GM10248 (cell line): ENCODE measurements at regions of chr7 and their contacts with region 1.

Region 1: GRCh38 chr7:128883622-128884501 is 21.2 kb downstream of the ATP6V1F start:
- DNase-seq: peak; percentile 93
- CTCF ChIP-seq: peak; percentile 98

Region 2: GRCh38 chr7:128425850-128426249 is 458.0 kb before region 1 on chr7:
- CTCF ChIA-PET with region 1: interaction called, 46 read pairs
- POLR2A ChIA-PET with region 1: no interaction called
- DNase-seq: peak; percentile 77
- CTCF ChIP-seq: peak; percentile 91

Region 3: DNA sequence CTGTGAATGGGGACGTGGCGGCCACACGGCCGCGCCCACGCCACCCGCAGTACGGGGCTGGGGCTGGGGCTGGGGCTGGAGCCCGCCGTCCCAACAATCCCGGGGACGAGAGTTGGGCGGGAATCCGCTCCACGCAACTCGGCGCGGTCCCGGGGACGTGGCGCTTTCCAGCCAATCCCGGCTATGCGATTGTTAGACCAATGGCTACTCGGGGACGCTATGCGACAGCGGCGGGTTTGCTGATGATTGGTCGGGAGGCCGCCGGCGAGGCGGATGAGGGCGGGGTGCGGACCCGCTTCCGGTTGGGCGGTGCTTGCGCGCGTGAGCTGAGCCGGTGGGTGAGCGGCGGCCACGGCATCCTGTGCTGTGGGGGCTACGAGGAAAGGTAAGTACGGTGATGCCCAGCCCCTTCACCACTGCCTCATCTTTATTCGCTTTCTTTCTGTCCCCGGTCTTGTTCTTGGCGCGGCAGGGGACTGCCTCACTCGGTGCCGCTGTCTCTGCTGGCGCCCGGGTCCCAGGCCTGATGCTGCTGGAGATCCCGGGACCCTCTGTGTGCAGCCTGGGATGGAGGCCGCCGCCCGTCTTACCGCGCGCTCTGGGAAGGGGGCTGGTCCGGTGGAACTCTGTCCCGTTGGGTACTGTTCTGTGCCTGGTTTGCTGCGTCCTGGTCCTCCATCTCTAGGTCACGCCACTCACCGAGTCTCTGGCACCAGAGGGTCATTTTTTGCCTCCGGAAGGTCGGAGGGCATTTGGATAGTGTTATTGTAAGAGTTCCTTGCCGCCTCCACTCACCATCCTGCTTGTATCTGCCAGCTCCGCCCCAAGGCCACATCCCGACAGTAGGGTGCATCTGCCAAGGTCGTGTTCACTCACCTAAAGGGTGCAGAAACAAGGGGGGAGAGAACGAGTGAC is 144.6 kb before region 1 on chr7 and contains the start of gene CALU:
- CTCF ChIA-PET with region 1: interaction called, 17 read pairs
- POLR2A ChIA-PET with region 1: interaction called, 3 read pairs
- DNase-seq: peak; percentile 100
- CTCF ChIP-seq: no peak

Region 4: DNA sequence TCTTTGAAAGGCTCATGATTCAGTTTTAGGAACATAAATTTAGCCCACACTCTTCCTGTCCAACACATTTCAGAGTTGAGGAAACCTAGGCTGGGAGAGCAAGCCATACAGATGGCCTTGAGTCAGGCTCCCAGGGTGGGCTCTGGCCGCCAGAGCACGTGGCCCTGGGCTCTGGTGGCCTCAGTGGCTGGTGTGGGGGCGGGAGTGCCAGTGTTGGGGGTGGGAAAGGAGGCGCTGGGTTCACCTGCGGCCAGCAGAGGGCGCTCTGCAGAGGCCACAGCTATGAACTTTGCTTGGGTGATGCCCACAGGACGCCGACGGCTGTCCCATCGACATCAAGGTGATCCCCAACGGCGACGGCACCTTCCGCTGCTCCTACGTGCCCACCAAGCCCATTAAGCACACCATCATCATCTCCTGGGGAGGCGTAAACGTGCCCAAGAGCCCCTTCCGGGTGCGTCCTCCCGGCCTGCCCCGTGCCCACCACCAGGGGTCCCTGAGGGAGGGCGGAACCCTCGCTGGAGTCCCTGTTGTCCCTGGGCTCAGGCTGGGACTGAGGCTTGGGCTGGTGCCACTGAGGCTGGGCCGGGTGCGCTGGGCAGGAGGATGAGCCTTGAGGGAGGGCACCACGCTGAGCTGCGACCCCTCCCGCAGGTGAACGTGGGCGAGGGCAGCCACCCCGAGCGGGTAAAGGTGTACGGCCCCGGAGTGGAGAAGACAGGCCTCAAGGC is 41.8 kb before region 1 on chr7:
- CTCF ChIA-PET with region 1: interaction called, 16 read pairs
- POLR2A ChIA-PET with region 1: no interaction called
- DNase-seq: peak; percentile 88
- CTCF ChIP-seq: peak; percentile 69

Region 5: DNA sequence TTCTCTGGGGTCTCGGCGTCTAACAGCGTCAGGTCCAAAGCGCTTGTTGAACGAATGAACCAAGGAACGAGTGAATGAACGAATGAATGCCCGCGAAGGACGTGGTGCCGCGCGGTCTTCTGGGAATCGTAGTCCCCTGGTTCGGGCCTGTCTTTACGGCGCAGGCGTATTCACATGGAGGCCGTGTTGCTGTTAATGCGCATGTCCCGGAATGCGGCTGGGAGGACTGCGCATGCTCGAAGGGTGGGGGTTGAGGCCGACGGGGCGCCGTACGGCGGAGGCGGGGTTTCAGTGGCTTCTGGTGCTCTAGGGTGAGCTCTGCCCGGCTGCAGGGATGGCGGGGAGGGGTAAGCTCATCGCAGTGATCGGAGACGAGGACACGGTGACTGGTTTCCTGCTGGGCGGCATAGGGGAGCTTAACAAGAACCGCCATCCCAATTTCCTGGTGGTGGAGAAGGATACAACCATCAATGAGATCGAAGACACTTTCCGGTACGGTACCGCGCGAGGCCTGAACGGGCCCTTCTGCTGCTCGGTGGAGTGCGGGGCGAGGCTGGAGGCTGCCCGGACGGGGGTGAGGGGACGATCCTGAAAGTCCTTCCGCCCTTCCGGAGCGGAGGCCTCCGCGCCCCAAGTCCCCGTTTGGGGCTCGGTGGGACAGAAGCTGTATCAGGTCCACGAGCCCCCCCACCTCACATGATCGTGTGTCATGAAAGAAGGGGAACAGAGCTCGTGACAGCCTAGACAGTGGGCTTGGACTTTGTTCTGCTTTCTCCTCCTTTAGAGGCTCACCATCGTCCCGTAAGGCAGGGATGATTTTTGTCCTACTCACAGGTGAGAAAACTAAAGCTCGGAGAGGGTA is 21.1 kb before region 1 on chr7 and contains the start of gene ATP6V1F:
- CTCF ChIA-PET with region 1: interaction called, 75 read pairs
- POLR2A ChIA-PET with region 1: interaction called, 4 read pairs
- DNase-seq: peak; percentile 99
- CTCF ChIP-seq: no peak

Region 6: GRCh38 chr7:128869138-128869943 is 14.5 kb before region 1 on chr7:
- CTCF ChIA-PET with region 1: interaction called, 75 read pairs
- POLR2A ChIA-PET with region 1: no interaction called
- DNase-seq: peak; percentile 69
- CTCF ChIP-seq: peak; percentile 29

Region 7: DNA sequence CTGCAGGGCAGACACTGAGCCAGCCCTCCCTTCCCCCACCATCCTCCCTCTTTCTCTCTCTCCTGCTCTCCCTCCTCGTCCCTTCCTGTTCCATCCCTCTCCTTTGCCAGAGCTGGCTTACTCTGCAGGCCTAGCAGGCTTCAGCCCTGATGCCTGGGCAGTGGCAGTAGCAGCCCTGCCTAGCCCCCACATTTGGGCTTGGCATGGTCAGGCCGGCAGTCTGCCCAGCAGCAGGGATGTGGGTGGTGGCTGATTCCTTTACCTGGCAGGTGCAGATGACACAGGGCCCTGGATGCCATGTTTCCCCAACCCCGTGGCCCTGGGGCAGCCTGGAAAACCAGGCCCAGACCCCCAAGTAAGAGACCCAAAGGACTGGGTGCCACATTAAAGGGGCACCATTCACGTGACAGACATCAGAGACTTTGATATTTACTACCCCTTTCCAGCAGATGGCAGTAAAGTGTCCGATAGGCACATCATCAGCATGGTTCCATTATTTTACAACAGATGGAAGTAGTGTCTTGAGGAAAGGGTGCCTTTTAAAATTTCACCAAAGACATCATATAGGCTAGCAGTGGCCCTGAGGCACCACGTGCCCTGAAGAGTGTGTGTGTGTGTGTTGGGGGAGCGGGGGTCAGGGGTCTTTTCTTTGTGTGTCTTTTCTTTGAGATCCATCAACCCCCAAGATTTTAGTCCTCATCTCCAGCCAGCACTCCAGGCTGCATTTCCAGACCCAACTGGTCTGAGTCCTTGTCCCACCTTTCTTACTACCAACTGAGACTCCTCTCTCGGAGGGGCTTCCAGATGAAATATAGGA is 20.7 kb after region 1 on chr7:
- CTCF ChIA-PET with region 1: interaction called, 28 read pairs
- POLR2A ChIA-PET with region 1: no interaction called
- DNase-seq: peak; percentile 86
- CTCF ChIP-seq: peak; percentile 62

Region 8: GRCh38 chr7:129043012-129043411 is 159.2 kb after region 1 on chr7:
- CTCF ChIA-PET with region 1: no interaction called
- POLR2A ChIA-PET with region 1: no interaction called
- DNase-seq: no peak
- CTCF ChIP-seq: no peak